ENCODE measurements at regions of chr3 and their contacts with region 1.

Region 1: DNA sequence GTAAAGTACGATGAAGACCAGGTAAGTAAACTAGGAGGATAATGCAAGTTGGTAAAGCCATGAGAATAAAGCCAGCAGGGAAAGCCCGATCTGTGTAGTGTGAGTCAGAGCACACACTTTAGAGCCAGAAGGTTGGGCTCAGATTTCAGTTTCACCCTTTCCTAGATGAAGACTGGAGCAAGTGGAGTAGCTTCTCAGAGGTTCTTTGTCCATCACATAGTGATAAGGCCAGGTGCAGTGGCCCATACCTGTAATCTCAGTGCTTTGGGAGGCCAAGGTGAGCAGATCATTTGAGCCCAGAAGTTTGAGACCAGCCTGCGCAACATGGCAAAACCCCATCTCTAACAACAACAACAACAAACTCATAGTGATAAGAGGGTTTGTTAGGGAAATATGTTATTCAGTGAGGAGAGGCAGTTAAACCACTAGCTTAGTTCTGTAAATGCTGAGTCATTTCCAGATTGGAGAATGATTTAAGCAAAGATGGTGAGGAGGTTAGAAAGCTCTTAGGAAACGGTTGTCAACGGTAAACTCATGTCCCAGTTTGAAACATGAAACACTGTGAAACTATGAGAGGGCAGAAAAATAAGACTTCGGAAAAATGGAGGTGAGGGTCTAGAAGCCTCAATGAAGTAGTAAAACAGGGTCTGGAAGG is 39.0 kb downstream of the IL12A start:
- DNase-seq: peak; percentile 55
- ATAC-seq: peak; percentile 89
- H3K4me3 ChIP-seq: no peak overlapping the region
- H3K27ac ChIP-seq: peak overlapping the region; percentile 94
- H3K4me1 ChIP-seq: peaks cover 26% of the 10 kb centered on the region
- H3K27me3 ChIP-seq: no peaks in the 10 kb centered on the region
- CTCF ChIP-seq: no peak
- EP300 ChIP-seq: peak; percentile 61 to 64; a peak in 2 of 4 replicates
- POLR2A ChIP-seq: no peak
- RAD21 ChIP-seq: no peak

Region 2: GRCh38 chr3:160052385-160053047 is 24.8 kb after region 1 on chr3:
- CTCF ChIA-PET with region 1: interaction called, 13 read pairs
- POLR2A ChIA-PET with region 1: no interaction called
- RAD21 ChIA-PET with region 1: no interaction called
- SMC1A ChIA-PET with region 1: no interaction called
- in situ Hi-C with region 1: no loop called
- intact Hi-C with region 1: no loop called
- DNase-seq: no peak
- ATAC-seq: no peak
- H3K4me3 ChIP-seq: no peak overlapping the region
- H3K27ac ChIP-seq: no peak overlapping the region
- H3K4me1 ChIP-seq: no peaks in the 10 kb centered on the region
- H3K27me3 ChIP-seq: no peaks in the 10 kb centered on the region
- CTCF ChIP-seq: no peak
- EP300 ChIP-seq: no peak
- POLR2A ChIP-seq: no peak
- RAD21 ChIP-seq: no peak

Region 3: DNA sequence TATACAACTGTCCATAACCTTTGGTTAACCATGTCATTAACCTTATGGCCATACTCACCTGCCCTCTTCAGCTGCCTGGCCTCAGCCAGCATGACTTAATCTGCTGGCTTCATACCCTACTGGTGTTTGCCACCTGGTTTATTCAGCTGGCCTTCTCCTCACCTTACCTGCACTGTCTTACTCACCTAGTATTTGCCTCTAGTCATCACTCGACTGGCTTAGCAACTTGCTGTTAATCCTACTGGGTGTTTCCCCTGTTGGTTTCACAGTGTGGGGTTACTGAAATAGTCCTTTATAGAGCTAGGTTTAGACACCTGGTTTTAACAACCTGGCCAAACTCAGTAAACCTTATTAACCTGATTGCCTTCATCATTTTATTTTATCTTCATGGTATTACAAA is 57.3 kb after region 1 on chr3:
- CTCF ChIA-PET with region 1: no interaction called
- POLR2A ChIA-PET with region 1: no interaction called
- RAD21 ChIA-PET with region 1: no interaction called
- SMC1A ChIA-PET with region 1: no interaction called
- in situ Hi-C with region 1: no loop called
- intact Hi-C with region 1: no loop called
- DNase-seq: no peak
- ATAC-seq: no peak
- H3K4me3 ChIP-seq: no peak overlapping the region
- H3K27ac ChIP-seq: no peak overlapping the region
- H3K4me1 ChIP-seq: no peaks in the 10 kb centered on the region
- H3K27me3 ChIP-seq: no peaks in the 10 kb centered on the region
- CTCF ChIP-seq: no peak
- EP300 ChIP-seq: no peak
- POLR2A ChIP-seq: no peak
- RAD21 ChIP-seq: no peak

Region 4: GRCh38 chr3:160210799-160211221 is 183.1 kb after region 1 on chr3:
- CTCF ChIA-PET with region 1: interaction called, 4 read pairs
- POLR2A ChIA-PET with region 1: no interaction called
- RAD21 ChIA-PET with region 1: no interaction called
- SMC1A ChIA-PET with region 1: no interaction called
- in situ Hi-C with region 1: no loop called
- intact Hi-C with region 1: loop called (anchors 2 kb)
- DNase-seq: no peak
- ATAC-seq: peak; percentile 53
- H3K4me3 ChIP-seq: no peak overlapping the region
- H3K27ac ChIP-seq: no peak overlapping the region
- H3K4me1 ChIP-seq: no peaks in the 10 kb centered on the region
- H3K27me3 ChIP-seq: no peaks in the 10 kb centered on the region
- CTCF ChIP-seq: 0 out of 6 replicates have a peak, but pooled peaks of 2 of the 3 experiments have one; percentile 8
- EP300 ChIP-seq: no peak
- POLR2A ChIP-seq: no peak
- RAD21 ChIP-seq: peak; percentile 55

Region 5: DNA sequence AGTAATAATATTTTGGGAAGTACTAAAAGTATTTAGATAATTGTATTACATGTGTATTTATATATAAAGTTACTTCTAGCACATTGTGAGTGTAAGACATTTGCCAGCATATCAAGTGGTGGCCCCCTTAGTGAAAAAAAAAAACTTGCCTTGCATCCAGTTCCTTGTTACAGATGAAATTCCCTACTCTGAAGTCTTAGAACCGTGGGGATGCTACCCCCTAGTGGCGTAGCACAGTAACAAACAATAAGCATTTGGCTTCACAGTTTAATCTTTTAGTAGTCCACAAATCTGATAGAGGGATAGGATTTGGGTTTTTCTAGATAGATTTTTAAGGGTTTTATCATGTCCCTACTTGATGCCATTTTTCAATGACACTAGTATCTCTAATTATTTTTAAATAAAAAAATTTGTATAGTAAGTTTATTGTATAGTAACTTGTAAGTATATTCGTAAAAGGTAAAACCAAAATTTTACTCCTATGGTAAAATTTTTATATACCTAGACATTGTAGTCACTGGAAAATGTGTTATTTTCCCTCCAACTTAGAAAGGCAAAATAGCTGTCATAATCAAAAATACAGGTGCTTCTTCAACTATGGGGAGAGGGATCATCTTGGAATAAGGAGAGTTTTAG is 386.1 kb after region 1 on chr3:
- CTCF ChIA-PET with region 1: interaction called, 45 read pairs
- POLR2A ChIA-PET with region 1: no interaction called
- RAD21 ChIA-PET with region 1: interaction called, 9 read pairs
- SMC1A ChIA-PET with region 1: interaction called, 29 read pairs
- in situ Hi-C with region 1: loop called (anchors 10 kb)
- intact Hi-C with region 1: loop called (anchors 1 kb)
- DNase-seq: peak; percentile 19
- ATAC-seq: peak; percentile 72
- H3K4me3 ChIP-seq: no peak overlapping the region
- H3K27ac ChIP-seq: no peak overlapping the region
- H3K4me1 ChIP-seq: no peaks in the 10 kb centered on the region
- H3K27me3 ChIP-seq: no peaks in the 10 kb centered on the region
- CTCF ChIP-seq: peak; percentile 77 to 83 (median 82)
- EP300 ChIP-seq: no peak
- POLR2A ChIP-seq: no peak
- RAD21 ChIP-seq: peak; percentile 93

Region 6: DNA sequence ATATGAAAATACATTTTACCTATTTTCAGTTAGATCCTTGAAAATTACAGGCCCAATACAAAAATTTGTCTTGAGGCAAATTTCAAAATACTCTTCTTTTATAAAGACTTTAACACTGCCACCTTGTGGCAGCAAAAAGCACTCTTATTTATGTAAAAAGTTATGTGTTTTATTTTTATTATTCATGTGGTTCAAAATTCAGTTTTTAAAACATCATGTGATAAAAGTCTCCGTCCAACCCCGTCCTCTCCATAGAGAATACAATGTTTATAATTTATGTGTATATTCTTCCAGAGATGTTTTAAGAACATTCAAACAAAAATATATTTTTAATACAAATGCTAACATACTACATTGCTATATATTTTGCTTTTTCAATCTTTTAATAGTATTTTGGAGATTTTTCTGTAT is 458.8 kb after region 1 on chr3:
- CTCF ChIA-PET with region 1: interaction called, 28 read pairs
- POLR2A ChIA-PET with region 1: no interaction called
- RAD21 ChIA-PET with region 1: interaction called, 4 read pairs
- SMC1A ChIA-PET with region 1: interaction called, 6 read pairs
- in situ Hi-C with region 1: no loop called
- intact Hi-C with region 1: loop called (anchors 5 kb)
- DNase-seq: no peak
- ATAC-seq: peak; percentile 44
- H3K4me3 ChIP-seq: no peak overlapping the region
- H3K27ac ChIP-seq: no peak overlapping the region
- H3K4me1 ChIP-seq: peaks cover 3% of the 10 kb centered on the region; the same call in 1 of the 2 replicates
- H3K27me3 ChIP-seq: no peaks in the 10 kb centered on the region
- CTCF ChIP-seq: peak; percentile 30 to 58 (median 49); a peak in 5 of 6 replicates
- EP300 ChIP-seq: no peak
- POLR2A ChIP-seq: no peak
- RAD21 ChIP-seq: peak; percentile 33; the same call in 1 of the 2 replicates